ENCODE measurements at regions of chr1 and their contacts with region 1.

Region 1: GRCh38 chr1:58755468-58755872 is 28.4 kb downstream of the JUN start:
- DNase-seq: peak; percentile 85
- ATAC-seq: peak; percentile 84
- H3K4me3 Mint-ChIP-seq: peak overlapping the region; percentile 11
- H3K27ac Mint-ChIP-seq: peak overlapping the region; percentile 85
- H3K4me1 Mint-ChIP-seq: peaks cover 45% of the 10 kb centered on the region
- H3K27me3 Mint-ChIP-seq: peaks cover 3% of the 10 kb centered on the region

Region 2: DNA sequence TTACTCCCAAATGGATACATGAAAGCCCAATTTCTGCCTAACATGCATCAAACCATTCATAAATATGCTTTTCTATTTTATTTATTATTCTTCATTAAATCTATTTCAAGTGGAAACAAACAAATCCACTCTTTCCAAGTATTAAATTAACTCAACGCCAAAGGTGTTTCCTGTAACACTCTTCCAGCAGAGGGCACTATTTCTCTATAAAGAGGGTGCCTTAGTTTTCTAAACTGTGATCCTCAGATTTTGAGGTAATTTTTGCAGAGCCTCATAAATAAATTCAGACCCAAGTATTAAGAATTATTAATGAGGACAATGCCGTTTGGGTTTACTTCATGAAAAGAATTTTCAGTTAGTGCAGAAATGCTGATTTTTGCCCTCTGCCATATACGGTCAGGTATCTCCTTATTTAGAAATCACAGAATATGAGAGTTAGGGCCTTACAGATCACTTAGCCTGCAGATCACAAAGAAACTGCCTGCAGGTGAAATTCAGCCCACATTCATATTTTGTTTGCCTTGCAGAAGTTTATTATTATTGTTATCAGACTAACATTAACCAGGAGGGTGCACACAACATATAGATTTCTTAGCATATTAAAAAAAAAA is 15.5 kb before region 1 on chr1:
- CTCF ChIA-PET with region 1: interaction called, 11 read pairs
- DNase-seq: no peak
- ATAC-seq: peak; percentile 64
- H3K4me3 Mint-ChIP-seq: no peak overlapping the region
- H3K27ac Mint-ChIP-seq: no peak overlapping the region
- H3K4me1 Mint-ChIP-seq: peaks cover 11% of the 10 kb centered on the region
- H3K27me3 Mint-ChIP-seq: peaks cover 13% of the 10 kb centered on the region

Region 3: GRCh38 chr1:58773406-58773840 is 18.0 kb after region 1 on chr1:
- CTCF ChIA-PET with region 1: interaction called, 12 read pairs
- DNase-seq: no peak
- ATAC-seq: peak; percentile 10
- H3K4me3 Mint-ChIP-seq: no peak overlapping the region
- H3K27ac Mint-ChIP-seq: no peak overlapping the region
- H3K4me1 Mint-ChIP-seq: peaks cover 16% of the 10 kb centered on the region
- H3K27me3 Mint-ChIP-seq: no peaks in the 10 kb centered on the region